OCI-LY7 (cell line): ENCODE measurements at regions of chr4 and their contacts with region 1.

Region 1: DNA sequence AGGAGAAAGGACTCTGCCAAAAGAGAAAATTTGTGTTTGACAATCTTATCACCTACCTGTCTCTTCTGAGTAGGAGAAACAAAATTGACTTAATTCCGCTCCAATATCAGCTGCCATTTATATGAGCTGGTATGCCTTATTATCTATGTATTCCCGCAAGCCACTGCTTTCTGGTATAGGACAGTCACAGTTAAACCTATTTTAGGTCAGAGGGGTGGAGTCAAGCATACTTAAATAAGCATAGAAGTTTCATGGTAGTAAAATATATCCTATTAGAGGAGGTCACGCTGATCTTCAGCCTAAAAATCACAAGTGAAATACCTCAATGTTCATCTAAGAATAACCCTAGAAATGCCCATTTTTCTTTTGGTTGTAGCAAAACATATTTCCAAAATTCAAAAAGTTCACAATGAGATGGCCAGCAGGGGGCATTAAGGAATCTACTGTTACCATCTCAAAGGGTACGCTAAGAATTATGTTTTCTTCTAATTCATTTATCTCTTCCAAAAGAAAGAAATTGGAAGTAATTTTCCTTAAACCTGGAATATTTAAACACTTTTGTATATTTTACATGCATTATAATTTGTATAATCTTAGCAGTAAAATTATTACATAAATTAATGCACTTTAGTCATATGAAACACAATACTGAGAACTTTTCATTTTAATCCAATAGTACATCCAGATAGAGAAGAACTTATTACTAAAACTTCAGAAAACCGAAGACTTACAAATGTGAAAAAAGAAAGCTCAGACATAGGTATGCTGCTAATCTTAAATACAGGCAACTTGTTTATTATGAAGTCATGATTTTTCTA is 10.5 kb downstream of the PPAT start:
- DNase-seq: peak; percentile 43
- H3K4me3 ChIP-seq: no peak overlapping the region
- H3K27ac ChIP-seq: peak overlapping the region; percentile 33
- H3K4me1 ChIP-seq: peaks cover 36% of the 10 kb centered on the region
- CTCF ChIP-seq: peak; percentile 91

Region 2: GRCh38 chr4:56799824-56800756 is 375.2 kb after region 1 on chr4:
- CTCF ChIA-PET with region 1: no interaction called
- POLR2A ChIA-PET with region 1: no interaction called
- intact Hi-C with region 1: no loop called
- DNase-seq: peak; percentile 86
- H3K4me3 ChIP-seq: peak overlapping the region; percentile 64
- H3K27ac ChIP-seq: no peak overlapping the region
- H3K4me1 ChIP-seq: peaks cover 19% of the 10 kb centered on the region
- CTCF ChIP-seq: peak; percentile 97

Region 3: DNA sequence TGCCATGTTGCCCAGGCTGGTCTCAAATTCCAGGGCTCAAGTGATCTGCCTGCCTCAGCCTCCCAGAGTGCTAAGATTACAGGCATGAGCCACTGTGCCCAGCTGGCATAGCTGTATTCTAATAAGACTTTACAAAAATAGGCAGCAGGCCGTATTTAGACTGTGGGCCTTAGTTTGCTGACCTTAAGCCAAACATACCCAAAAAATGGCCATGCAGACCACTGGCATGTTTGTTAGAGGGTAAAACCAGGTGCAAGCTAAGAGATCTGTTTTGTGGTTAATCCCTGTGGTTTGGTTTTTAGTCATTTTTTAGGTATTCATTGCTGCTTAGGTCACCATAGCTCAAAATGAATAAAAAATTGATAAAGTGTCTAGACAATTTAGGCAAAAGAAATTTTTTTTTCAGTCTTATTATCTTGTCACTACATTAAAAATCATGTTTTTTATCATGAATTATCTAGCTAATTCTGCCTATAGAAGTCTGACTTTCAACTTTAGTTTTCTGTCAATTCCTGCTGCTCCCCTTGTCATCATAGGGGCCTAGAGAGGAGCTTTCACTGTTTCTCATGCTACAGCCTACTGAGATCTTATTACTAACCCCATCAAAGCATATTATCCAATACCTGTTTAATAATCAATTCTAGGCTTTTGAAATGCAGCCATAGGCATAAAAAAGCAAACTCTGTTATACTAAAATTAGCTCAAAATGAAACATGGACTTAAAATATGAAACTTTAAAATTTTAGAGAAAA is 404.1 kb after region 1 on chr4:
- CTCF ChIA-PET with region 1: no interaction called
- POLR2A ChIA-PET with region 1: no interaction called
- intact Hi-C with region 1: loop called (anchors 10 kb)
- DNase-seq: no peak
- H3K4me3 ChIP-seq: no peak overlapping the region
- H3K27ac ChIP-seq: no peak overlapping the region
- H3K4me1 ChIP-seq: no peaks in the 10 kb centered on the region
- CTCF ChIP-seq: no peak